Activated CD4-positive, alpha-beta memory T cell treated with anti-CD3 and anti-CD28 coated beads for 36 hours (primary cell): ENCODE measurements at regions of chr1 and their contacts with region 1.

Region 1: GRCh38 chr1:8604041-8604945 is 213.1 kb downstream of the RERE start:
- DNase-seq: peak; percentile 63
- H3K4me3 Mint-ChIP-seq: peak overlapping the region; percentile 73
- H3K27ac Mint-ChIP-seq: peak overlapping the region; percentile 97
- H3K4me1 Mint-ChIP-seq: peaks cover 40% of the 10 kb centered on the region
- H3K27me3 Mint-ChIP-seq: no peaks in the 10 kb centered on the region

Region 2: DNA sequence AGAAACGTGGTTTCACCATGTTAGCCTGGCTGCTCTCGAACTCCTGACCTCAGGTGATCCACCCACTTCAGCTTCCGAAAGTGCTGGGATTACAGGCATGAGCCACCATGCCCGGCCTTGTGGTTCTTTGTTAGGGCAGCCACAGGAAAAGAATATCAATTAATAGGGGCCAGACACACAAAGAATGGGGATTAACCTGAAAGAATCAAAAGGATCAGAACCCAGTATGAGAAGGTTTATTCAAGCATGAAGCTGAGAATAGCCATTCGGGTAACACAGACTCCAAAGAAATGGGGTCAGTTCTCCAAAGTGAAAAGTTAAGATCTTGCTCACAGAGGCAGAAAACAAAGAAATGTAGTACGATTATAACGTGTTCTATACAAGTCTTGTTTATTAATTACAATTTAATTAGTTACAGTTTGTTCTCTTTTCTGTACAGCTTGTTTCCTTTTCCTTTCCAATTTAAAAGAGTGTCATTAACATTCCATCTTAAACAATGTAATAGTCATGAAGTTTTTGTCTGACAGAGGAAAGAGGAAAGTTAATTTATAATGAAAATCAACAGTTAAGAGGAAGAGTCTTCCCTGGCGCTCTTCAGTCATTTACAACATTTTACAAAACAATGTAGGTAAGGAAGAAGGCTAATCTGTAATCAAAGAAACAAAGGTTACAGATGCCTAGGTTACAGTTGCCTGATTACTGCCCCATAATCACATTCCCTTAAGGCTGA is 337.7 kb before region 1 on chr1:
- CTCF ChIA-PET with region 1: no interaction called
- POLR2A ChIA-PET with region 1: no interaction called
- intact Hi-C with region 1: no loop called
- DNase-seq: no peak
- H3K4me3 Mint-ChIP-seq: no peak overlapping the region
- H3K27ac Mint-ChIP-seq: no peak overlapping the region
- H3K4me1 Mint-ChIP-seq: no peaks in the 10 kb centered on the region
- H3K27me3 Mint-ChIP-seq: peaks cover 8% of the 10 kb centered on the region

Region 3: GRCh38 chr1:8423650-8424538 is 180.4 kb before region 1 on chr1:
- CTCF ChIA-PET with region 1: no interaction called
- POLR2A ChIA-PET with region 1: interaction called, 3 read pairs
- intact Hi-C with region 1: loop called (anchors 2 kb)
- DNase-seq: peak; percentile 74
- H3K4me3 Mint-ChIP-seq: peak overlapping the region; percentile 85
- H3K27ac Mint-ChIP-seq: peak overlapping the region; percentile 96
- H3K4me1 Mint-ChIP-seq: peaks cover 41% of the 10 kb centered on the region
- H3K27me3 Mint-ChIP-seq: no peaks in the 10 kb centered on the region

Region 4: GRCh38 chr1:8495928-8496401 is 108.3 kb before region 1 on chr1:
- CTCF ChIA-PET with region 1: no interaction called
- POLR2A ChIA-PET with region 1: no interaction called
- intact Hi-C with region 1: loop called (anchors 1 kb)
- DNase-seq: peak; percentile 56
- H3K4me3 Mint-ChIP-seq: no peak overlapping the region
- H3K27ac Mint-ChIP-seq: peak overlapping the region; percentile 62
- H3K4me1 Mint-ChIP-seq: peaks cover 26% of the 10 kb centered on the region
- H3K27me3 Mint-ChIP-seq: no peaks in the 10 kb centered on the region

Region 5: DNA sequence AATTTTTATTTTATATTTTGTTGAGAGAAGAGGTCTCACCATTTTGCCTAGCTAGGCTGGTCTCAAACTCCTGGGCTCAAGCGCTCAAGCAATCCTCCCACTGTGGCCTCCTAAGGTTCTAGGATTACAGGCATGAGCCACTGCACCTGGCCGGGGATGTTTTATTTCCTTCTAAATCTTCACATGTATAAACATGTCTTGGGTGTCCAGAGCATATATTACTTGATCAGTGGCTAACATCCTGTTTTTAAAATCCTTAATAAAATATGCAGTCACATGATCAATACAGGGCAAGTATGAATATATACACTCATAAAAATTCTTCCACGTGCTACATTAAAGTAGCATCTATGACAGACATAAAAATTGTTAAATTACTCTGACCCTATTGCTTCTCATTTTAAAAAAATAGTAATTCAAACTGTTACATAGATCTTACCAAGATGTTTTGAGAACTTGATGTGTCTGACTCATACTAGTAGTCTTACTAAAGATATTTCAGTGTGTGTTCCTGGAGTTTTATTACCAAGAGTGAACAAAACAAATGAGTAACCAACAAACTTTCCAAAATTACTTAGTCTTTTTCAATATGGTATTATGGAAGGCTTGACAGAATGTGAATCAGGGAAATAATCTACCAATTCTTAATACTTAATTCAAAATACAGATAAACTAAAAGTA is 63.9 kb before region 1 on chr1:
- CTCF ChIA-PET with region 1: no interaction called
- POLR2A ChIA-PET with region 1: no interaction called
- intact Hi-C with region 1: no loop called
- DNase-seq: no peak
- H3K4me3 Mint-ChIP-seq: no peak overlapping the region
- H3K27ac Mint-ChIP-seq: peak overlapping the region; percentile 69
- H3K4me1 Mint-ChIP-seq: peaks cover 40% of the 10 kb centered on the region
- H3K27me3 Mint-ChIP-seq: no peaks in the 10 kb centered on the region

Region 6: GRCh38 chr1:8560611-8561544 is 43.4 kb before region 1 on chr1:
- CTCF ChIA-PET with region 1: interaction called, 18 read pairs
- POLR2A ChIA-PET with region 1: no interaction called
- intact Hi-C with region 1: loop called (anchors 2 kb)
- DNase-seq: no peak
- H3K4me3 Mint-ChIP-seq: no peak overlapping the region
- H3K27ac Mint-ChIP-seq: peak overlapping the region; percentile 50
- H3K4me1 Mint-ChIP-seq: peaks cover 41% of the 10 kb centered on the region
- H3K27me3 Mint-ChIP-seq: no peaks in the 10 kb centered on the region

Region 7: GRCh38 chr1:8649027-8649426 is 44.7 kb after region 1 on chr1:
- CTCF ChIA-PET with region 1: interaction called, 3 read pairs
- POLR2A ChIA-PET with region 1: no interaction called
- intact Hi-C with region 1: loop called (anchors 1 kb)
- DNase-seq: no peak
- H3K4me3 Mint-ChIP-seq: no peak overlapping the region
- H3K27ac Mint-ChIP-seq: no peak overlapping the region
- H3K4me1 Mint-ChIP-seq: peaks cover 47% of the 10 kb centered on the region
- H3K27me3 Mint-ChIP-seq: no peaks in the 10 kb centered on the region

Region 8: GRCh38 chr1:8671306-8671917 is 67.1 kb after region 1 on chr1:
- CTCF ChIA-PET with region 1: interaction called, 8 read pairs
- POLR2A ChIA-PET with region 1: no interaction called
- intact Hi-C with region 1: loop called (anchors 2 kb)
- DNase-seq: no peak
- H3K4me3 Mint-ChIP-seq: no peak overlapping the region
- H3K27ac Mint-ChIP-seq: no peak overlapping the region
- H3K4me1 Mint-ChIP-seq: peaks cover 43% of the 10 kb centered on the region
- H3K27me3 Mint-ChIP-seq: no peaks in the 10 kb centered on the region

Region 9: DNA sequence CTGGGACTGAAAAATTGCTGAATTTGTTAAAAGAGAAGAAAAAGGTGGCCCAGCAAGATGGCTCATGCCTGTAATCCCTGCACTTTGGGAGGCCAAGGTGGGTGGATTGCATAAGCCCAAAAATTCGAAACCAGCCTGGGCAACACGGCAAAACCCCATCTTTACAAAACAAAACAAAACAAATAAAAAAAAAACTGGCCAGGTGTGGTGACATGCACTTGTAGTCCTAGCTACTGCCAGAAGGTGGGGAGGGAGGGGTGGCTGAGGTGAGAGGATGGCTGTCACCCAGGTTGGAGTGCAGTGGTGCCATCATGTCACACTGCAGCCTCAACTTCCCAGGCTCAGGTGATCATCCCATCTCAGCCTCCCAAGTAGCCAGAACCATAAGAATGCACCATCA is 190.3 kb after region 1 on chr1:
- CTCF ChIA-PET with region 1: no interaction called
- POLR2A ChIA-PET with region 1: no interaction called
- intact Hi-C with region 1: no loop called
- DNase-seq: no peak
- H3K4me3 Mint-ChIP-seq: no peak overlapping the region
- H3K27ac Mint-ChIP-seq: no peak overlapping the region
- H3K4me1 Mint-ChIP-seq: peaks cover 2% of the 10 kb centered on the region
- H3K27me3 Mint-ChIP-seq: no peaks in the 10 kb centered on the region

Region 10: GRCh38 chr1:8878448-8879347 is 274.4 kb after region 1 on chr1 and contains the start of gene ENO1:
- CTCF ChIA-PET with region 1: no interaction called
- POLR2A ChIA-PET with region 1: no interaction called
- intact Hi-C with region 1: loop called (anchors 5 kb)
- DNase-seq: peak; percentile 99
- H3K4me3 Mint-ChIP-seq: peak within 1 kb of the TSS; percentile 95
- H3K27ac Mint-ChIP-seq: peak within 1 kb of the TSS; percentile 100
- H3K4me1 Mint-ChIP-seq: peaks cover 31% of the 10 kb centered on the region
- H3K27me3 Mint-ChIP-seq: peaks cover 2% of the 10 kb centered on the region
- total RNA-seq, gene ENO1: 3,008 to 3,028 TPM